OCI-LY7 (cell line): ENCODE measurements at regions of chr9 and their contacts with region 1.

Region 1: DNA sequence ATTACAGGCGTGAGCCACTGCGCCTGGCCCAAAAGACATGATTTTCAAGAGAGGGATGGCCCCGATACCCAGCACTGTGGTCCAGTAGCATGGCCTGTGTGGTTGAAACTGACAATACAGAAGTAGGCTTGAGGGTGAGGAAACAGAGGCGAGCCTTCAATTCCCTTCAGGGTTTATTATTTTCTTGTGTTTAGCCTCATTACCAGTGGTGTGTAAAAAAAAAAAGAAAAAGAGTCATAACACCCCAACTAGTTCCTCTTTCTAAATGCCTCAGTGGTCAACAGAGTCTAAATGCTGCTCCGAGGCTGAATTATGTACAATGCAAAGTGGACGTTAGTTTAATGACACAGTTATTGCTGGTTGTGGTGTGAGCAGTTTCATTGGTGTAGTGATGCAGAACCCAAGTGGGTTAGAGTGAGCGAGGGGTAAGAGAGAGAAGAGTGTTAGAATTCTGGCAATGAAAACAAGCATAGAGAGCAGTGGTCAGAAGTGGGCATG is 58.8 kb downstream of the SNX30 start:
- DNase-seq: peak; percentile 85
- H3K4me3 ChIP-seq: peak overlapping the region; percentile 34
- H3K27ac ChIP-seq: peak overlapping the region; percentile 65
- H3K4me1 ChIP-seq: peaks cover 35% of the 10 kb centered on the region
- CTCF ChIP-seq: no peak

Region 2: GRCh38 chr9:112379177-112380101 is 430.0 kb before region 1 on chr9:
- CTCF ChIA-PET with region 1: no interaction called
- POLR2A ChIA-PET with region 1: no interaction called
- intact Hi-C with region 1: loop called (anchors 5 kb)
- DNase-seq: peak; percentile 97
- H3K4me3 ChIP-seq: peak overlapping the region; percentile 90
- H3K27ac ChIP-seq: peak overlapping the region; percentile 51
- H3K4me1 ChIP-seq: peaks cover 42% of the 10 kb centered on the region
- CTCF ChIP-seq: no peak